ENCODE measurements at regions of chrX and their contacts with region 1.

Region 1: DNA sequence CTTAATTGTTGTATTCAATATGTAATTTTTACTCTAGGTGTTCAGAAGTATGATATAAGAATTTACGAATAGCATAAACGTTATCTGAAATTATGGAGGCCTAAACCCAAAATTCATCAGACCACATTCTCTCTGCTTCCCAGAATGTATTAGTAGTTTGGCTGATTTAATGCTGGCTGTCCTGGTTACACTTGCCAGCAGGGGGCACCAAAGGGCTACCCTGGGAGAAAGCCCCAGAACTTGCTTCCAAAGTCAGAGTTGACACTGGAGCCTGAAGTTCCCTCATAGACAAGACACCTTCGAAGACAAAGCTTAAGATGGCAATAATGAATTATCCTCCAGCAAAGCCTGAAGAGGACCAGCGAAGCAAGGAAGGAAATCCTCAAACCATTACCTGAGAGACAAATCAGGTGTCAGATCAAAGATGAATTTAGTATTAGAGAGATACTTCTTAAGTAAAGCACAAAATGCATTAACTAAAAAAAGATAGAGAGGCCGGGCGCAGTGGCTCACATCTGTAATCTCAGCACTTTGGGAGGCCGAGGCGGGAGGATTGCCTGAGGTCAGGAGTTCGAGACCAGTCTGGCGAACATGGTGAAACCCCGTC is 11.3 kb upstream of the ANOS1 start:
- DNase-seq: peak; percentile 65
- ATAC-seq: no peak
- H3K4me3 Mint-ChIP-seq: no peak overlapping the region
- H3K27ac Mint-ChIP-seq: no peak overlapping the region
- H3K4me1 Mint-ChIP-seq: no peaks in the 10 kb centered on the region
- H3K27me3 Mint-ChIP-seq: no peaks in the 10 kb centered on the region
- CTCF ChIP-seq: peak; percentile 72

Region 2: GRCh38 chrX:7996414-7996813 is 746.8 kb before region 1 on chrX:
- CTCF ChIA-PET with region 1: interaction called, 12 read pairs
- POLR2A ChIA-PET with region 1: no interaction called
- intact Hi-C with region 1: loop called (anchors 5 kb)
- DNase-seq: peak; percentile 31
- ATAC-seq: no peak
- H3K4me3 Mint-ChIP-seq: no peak overlapping the region
- H3K27ac Mint-ChIP-seq: no peak overlapping the region
- H3K4me1 Mint-ChIP-seq: no peaks in the 10 kb centered on the region
- H3K27me3 Mint-ChIP-seq: no peaks in the 10 kb centered on the region
- CTCF ChIP-seq: no peak

Region 3: DNA sequence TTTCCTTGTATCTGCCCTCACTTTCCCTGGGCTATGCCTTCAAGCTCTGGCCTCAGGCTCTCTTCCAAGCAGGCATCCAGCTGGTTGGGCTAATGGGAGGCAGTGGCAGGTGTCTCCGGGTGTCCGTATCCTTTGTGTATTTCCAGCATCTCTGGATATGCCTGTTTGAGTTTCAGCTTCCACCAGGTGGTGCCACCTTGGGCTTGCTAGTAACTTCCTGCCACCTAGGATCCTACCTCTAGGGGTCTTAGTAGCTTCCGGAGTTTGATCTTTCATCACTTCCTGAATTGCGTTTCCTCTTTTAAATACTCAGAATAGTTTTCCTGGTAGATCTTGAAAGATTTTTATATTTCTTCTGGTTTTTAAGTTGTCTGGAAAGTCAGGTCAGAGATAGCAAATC is 11.9 kb after region 1 on chrX:
- CTCF ChIA-PET with region 1: interaction called, 10 read pairs
- POLR2A ChIA-PET with region 1: no interaction called
- intact Hi-C with region 1: no loop called
- DNase-seq: peak; percentile 27
- ATAC-seq: no peak
- H3K4me3 Mint-ChIP-seq: no peak overlapping the region
- H3K27ac Mint-ChIP-seq: no peak overlapping the region
- H3K4me1 Mint-ChIP-seq: peaks cover 3% of the 10 kb centered on the region
- H3K27me3 Mint-ChIP-seq: no peaks in the 10 kb centered on the region
- CTCF ChIP-seq: peak; percentile 39

Region 4: GRCh38 chrX:8815464-8816065 is 72.3 kb after region 1 on chrX:
- CTCF ChIA-PET with region 1: interaction called, 6 read pairs
- POLR2A ChIA-PET with region 1: no interaction called
- intact Hi-C with region 1: loop called (anchors 10 kb)
- DNase-seq: peak; percentile 12
- ATAC-seq: peak; percentile 51
- H3K4me3 Mint-ChIP-seq: no peak overlapping the region
- H3K27ac Mint-ChIP-seq: no peak overlapping the region
- H3K4me1 Mint-ChIP-seq: no peaks in the 10 kb centered on the region
- H3K27me3 Mint-ChIP-seq: no peaks in the 10 kb centered on the region
- CTCF ChIP-seq: peak; percentile 57

Region 5: DNA sequence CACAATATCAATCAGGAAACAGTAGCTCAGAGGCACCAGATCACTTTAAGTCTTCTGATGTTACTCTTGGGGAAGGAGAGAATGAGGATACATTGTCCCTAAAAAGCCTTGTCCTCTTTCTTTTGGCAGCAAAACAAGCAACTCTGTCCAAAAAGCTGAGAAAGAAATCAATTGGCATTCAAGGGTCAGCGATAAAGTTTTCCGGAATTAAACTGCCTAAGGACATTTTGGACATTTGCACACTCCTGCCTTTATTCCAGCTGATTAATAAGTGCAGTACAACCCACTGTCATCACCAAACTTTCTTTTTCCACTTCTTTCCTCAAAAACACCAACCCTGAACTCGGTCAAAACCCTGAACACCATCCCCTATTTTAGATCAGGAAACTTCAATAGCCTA is 143.8 kb after region 1 on chrX:
- CTCF ChIA-PET with region 1: no interaction called
- POLR2A ChIA-PET with region 1: no interaction called
- intact Hi-C with region 1: no loop called
- DNase-seq: no peak
- ATAC-seq: no peak
- H3K4me3 Mint-ChIP-seq: no peak overlapping the region
- H3K27ac Mint-ChIP-seq: no peak overlapping the region
- H3K4me1 Mint-ChIP-seq: peaks cover 3% of the 10 kb centered on the region
- H3K27me3 Mint-ChIP-seq: peaks cover 2% of the 10 kb centered on the region
- CTCF ChIP-seq: no peak